Left colon (tissue), 2 donors: ENCODE measurements at regions of chr2 and their contacts with region 1.

Region 1: GRCh38 chr2:137910641-137911040 is 53.6 kb upstream of the HNMT start:
- DNase-seq: no peak
- ATAC-seq: peak; percentile 37

Region 2: DNA sequence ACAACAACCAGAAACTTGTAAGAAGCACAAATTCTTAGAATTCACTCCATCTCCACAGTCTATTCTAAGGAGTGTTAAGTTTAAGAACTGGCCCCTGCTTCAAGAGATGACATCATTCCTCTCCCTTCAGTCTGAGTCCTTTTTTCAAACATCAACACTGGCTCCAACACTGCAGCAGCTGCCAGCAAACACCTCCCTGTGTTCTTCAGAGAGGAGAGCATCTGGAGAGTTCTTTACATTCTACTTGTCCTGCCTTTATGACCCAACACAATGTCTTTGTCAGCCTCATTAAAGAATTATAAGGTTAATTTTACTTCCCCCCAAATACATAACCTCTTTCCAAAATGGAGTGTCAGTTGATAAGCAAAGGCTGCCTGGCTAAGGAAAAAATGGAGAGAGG is 176.0 kb after region 1 on chr2:
- intact Hi-C with region 1: loop called in 1 of 2 experiments (anchors 10 kb)
- DNase-seq: no peak
- ATAC-seq: no peak

Region 3: GRCh38 chr2:138787053-138787666 is 876.5 kb after region 1 on chr2:
- intact Hi-C with region 1: loop called in 1 of 2 experiments (anchors 10 kb)
- DNase-seq: no peak
- ATAC-seq: peak; percentile 42

Region 4: GRCh38 chr2:138827426-138828054 is 916.9 kb after region 1 on chr2:
- intact Hi-C with region 1: loop called in 1 of 2 experiments (anchors 5 kb)
- DNase-seq: no peak
- ATAC-seq: peak; percentile 48